K562 (cell line): ENCODE measurements at regions of chr4 and their contacts with region 1.

Region 1: GRCh38 chr4:1971456-1972200 is 37.1 kb downstream of the NELFA start:
- DNase-seq: no peak
- ATAC-seq: no peak
- H3K4me3 ChIP-seq: no peak overlapping the region
- H3K27ac ChIP-seq: no peak overlapping the region
- H3K4me1 ChIP-seq: no peaks in the 10 kb centered on the region
- H3K27me3 ChIP-seq: no peaks in the 10 kb centered on the region
- CTCF ChIP-seq: no peak
- EP300 ChIP-seq: no peak
- POLR2A ChIP-seq: no peak
- RAD21 ChIP-seq: no peak

Region 2: GRCh38 chr4:1683736-1684505 is 287.7 kb before region 1 on chr4 and contains the start of gene FAM53A:
- CTCF ChIA-PET with region 1: no interaction called
- POLR2A ChIA-PET with region 1: no interaction called
- in situ Hi-C with region 1: no loop called
- intact Hi-C with region 1: no loop called
- DNase-seq: peak; percentile 92 to 96 (median 96)
- ATAC-seq: peak; percentile 93
- H3K4me3 ChIP-seq: peak within 1 kb of the TSS; percentile 48
- H3K27ac ChIP-seq: peak within 1 kb of the TSS; percentile 85
- H3K4me1 ChIP-seq: peaks cover 8 to 31% of the 10 kb centered on the region in 2 experiments; a peak in 3 of 5 replicates
- H3K27me3 ChIP-seq: no peaks in the 10 kb centered on the region
- CTCF ChIP-seq: no peak
- EP300 ChIP-seq: no peak
- POLR2A ChIP-seq: peak; percentile 56; the same call in 1 of the 2 replicates
- RAD21 ChIP-seq: no peak
- polyA plus RNA-seq, gene FAM53A: not detected

Region 3: DNA sequence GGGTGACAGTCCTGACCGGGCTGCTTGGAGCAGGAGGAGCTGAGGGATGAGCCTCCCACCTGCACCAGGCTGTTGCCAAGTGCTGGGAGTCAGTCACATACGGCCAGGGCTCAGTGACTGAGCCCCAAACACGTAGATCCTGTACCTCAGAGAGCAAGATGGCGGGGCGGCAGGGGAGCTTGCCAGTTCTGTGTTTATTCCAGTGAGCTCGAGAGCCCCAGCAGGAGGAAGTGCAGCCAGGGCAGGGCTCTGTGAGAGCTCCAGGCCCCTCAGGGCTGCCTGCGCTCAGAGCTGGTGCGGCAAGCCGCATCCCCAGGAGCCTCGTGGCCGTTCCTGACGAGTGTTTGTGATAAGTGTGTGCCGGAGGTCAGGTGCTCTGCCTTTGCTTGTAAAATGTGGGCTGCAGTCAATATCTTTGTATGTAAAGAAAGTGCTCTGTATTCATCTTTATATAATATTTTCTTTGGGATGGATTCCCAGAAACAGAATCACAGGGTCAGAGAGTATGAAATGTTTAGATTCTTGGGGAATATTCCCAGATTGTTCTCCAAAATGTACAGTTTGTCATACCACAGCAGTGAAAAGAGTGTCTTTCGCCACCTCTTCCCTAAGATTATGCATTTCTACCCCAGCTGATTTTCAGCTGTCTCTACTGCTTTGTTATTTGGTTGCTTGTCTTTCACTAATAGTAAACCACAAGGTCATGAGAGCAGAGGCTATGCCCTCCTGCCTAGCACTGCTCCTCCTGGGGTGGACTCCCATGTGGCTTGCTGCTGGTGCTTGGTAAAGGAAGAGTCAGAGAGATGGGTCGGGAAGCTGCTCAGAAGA is 13.1 kb before region 1 on chr4:
- CTCF ChIA-PET with region 1: no interaction called
- POLR2A ChIA-PET with region 1: interaction called, 11 read pairs
- in situ Hi-C with region 1: no loop called
- intact Hi-C with region 1: no loop called
- DNase-seq: no peak
- ATAC-seq: no peak
- H3K4me3 ChIP-seq: no peak overlapping the region
- H3K27ac ChIP-seq: no peak overlapping the region; the same call in 2 of the 3 replicates
- H3K4me1 ChIP-seq: peaks cover 0 to 4% of the 10 kb centered on the region in 2 experiments; a peak in 3 of 5 replicates
- H3K27me3 ChIP-seq: no peaks in the 10 kb centered on the region
- CTCF ChIP-seq: no peak
- EP300 ChIP-seq: no peak
- POLR2A ChIP-seq: no peak
- RAD21 ChIP-seq: no peak

Region 4: DNA sequence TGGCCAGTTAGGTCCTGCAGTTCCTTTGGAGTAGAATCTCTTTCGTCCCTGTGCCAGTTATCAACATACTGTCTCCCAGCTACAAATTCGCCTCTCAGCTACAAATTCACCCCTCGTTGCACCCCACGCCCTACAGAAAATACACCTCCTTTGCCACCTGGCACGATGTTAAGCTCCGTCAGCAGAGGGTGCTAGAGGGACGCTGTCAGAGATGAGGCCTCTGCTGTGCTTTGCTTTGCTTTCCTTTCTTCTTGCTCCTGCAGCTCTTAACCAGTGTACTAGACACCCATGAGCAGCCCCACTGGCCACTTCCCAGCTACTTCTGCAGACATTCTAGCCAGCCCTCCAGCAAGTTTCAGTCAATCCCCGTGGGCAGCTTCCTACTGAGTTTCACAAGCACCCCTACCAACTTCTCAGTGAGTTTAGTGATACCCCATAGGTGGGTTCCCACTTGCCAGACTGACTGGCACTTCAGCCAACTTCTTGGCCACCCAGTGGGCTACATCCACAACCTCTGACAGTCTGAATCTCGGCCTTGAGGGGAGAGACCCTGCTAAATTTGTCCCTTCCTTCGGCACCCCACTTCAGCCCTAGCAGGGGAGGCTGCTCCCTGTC is 248.5 kb after region 1 on chr4:
- CTCF ChIA-PET with region 1: no interaction called
- POLR2A ChIA-PET with region 1: no interaction called
- in situ Hi-C with region 1: no loop called
- intact Hi-C with region 1: no loop called
- DNase-seq: peak; percentile 67 to 81 (median 69)
- ATAC-seq: peak; percentile 97
- H3K4me3 ChIP-seq: no peak overlapping the region
- H3K27ac ChIP-seq: no peak overlapping the region
- H3K4me1 ChIP-seq: no peaks in the 10 kb centered on the region; a peak in 1 of 5 replicates
- H3K27me3 ChIP-seq: peaks cover 0 to 9% of the 10 kb centered on the region in 2 experiments; a peak in 3 of 5 replicates
- CTCF ChIP-seq: peak; percentile 89 to 95 (median 90)
- EP300 ChIP-seq: no peak
- POLR2A ChIP-seq: no peak
- RAD21 ChIP-seq: peak; percentile 78 to 93